Naive thymus-derived CD4-positive, alpha-beta T cell (primary cell): ENCODE measurements at regions of chr13 and their contacts with region 1.

Region 1: GRCh38 chr13:50236898-50237318 is 221.7 kb downstream of the KCNRG start:
- DNase-seq: peak in 4 of 9 donors; percentile 5 to 38 (median 14)
- ATAC-seq: peak; percentile 88
- H3K4me3 ChIP-seq: peak overlapping the region; percentile 43
- H3K4me3 Mint-ChIP-seq: peak overlapping the region; percentile 38 to 78 (median 65)
- H3K27ac ChIP-seq: no peak overlapping the region
- H3K27ac Mint-ChIP-seq: peak overlapping the region; percentile 3 to 66 (median 15)
- H3K4me1 ChIP-seq: peaks cover 5 to 8% of the 10 kb centered on the region in 2 donors
- H3K4me1 Mint-ChIP-seq: peaks cover 6 to 40% (median 19%) of the 10 kb centered on the region in 7 donors
- H3K27me3 ChIP-seq: no peaks in the 10 kb centered on the region
- H3K27me3 Mint-ChIP-seq: peaks cover 0 to 68% (median 0%) of the 10 kb centered on the region in 5 donors

Region 2: GRCh38 chr13:50130123-50130946 is 106.6 kb before region 1 on chr13:
- CTCF ChIA-PET with region 1: no interaction called
- POLR2A ChIA-PET with region 1: interaction called, 4 read pairs
- intact Hi-C with region 1: loop called (anchors 2 to 5 kb)
- DNase-seq: peak in 5 of 9 donors; percentile 22 to 47 (median 38)
- ATAC-seq: peak; percentile 17
- H3K4me3 ChIP-seq: peak overlapping the region; percentile 46
- H3K4me3 Mint-ChIP-seq: peak overlapping the region; percentile 70 to 94 (median 79)
- H3K27ac ChIP-seq: no peak overlapping the region
- H3K27ac Mint-ChIP-seq: peak overlapping the region; percentile 34 to 82 (median 62)
- H3K4me1 ChIP-seq: peaks cover 46 to 52% of the 10 kb centered on the region in 2 donors
- H3K4me1 Mint-ChIP-seq: peaks cover 21 to 64% (median 53%) of the 10 kb centered on the region in 7 donors
- H3K27me3 ChIP-seq: peaks cover 30 to 59% of the 10 kb centered on the region in 2 donors
- H3K27me3 Mint-ChIP-seq: peaks cover 38 to 71% (median 61%) of the 10 kb centered on the region in 5 donors

Region 3: GRCh38 chr13:50255639-50256038 is 18.7 kb after region 1 on chr13:
- CTCF ChIA-PET with region 1: interaction called, 3 read pairs
- POLR2A ChIA-PET with region 1: no interaction called
- intact Hi-C with region 1: loop called in 1 of 2 experiments (anchors 2 kb)
- DNase-seq: no peak
- ATAC-seq: peak; percentile 65
- H3K4me3 ChIP-seq: no peak overlapping the region
- H3K4me3 Mint-ChIP-seq: peak overlapping the region in 1 of 10 donors; percentile 26
- H3K27ac ChIP-seq: no peak overlapping the region
- H3K27ac Mint-ChIP-seq: peak overlapping the region in 1 of 9 donors; percentile 24
- H3K4me1 ChIP-seq: peaks cover 0 to 22% of the 10 kb centered on the region in 2 donors
- H3K4me1 Mint-ChIP-seq: peaks cover 9 to 29% (median 21%) of the 10 kb centered on the region in 7 donors
- H3K27me3 ChIP-seq: no peaks in the 10 kb centered on the region
- H3K27me3 Mint-ChIP-seq: peaks cover 0 to 74% (median 0%) of the 10 kb centered on the region in 5 donors